Activated CD8-positive, alpha-beta T cell treated with anti-CD3 and anti-CD28 coated beads for 36 hours (primary cell): ENCODE measurements at regions of chr6 and their contacts with region 1.

Region 1: GRCh38 chr6:154733012-154733625 is at the start of gene SCAF8:
- DNase-seq: peak; percentile 80
- ATAC-seq: peak; percentile 74
- H3K4me3 Mint-ChIP-seq: peak within 1 kb of the TSS; percentile 83
- H3K27ac Mint-ChIP-seq: peak within 1 kb of the TSS; percentile 88
- H3K4me1 Mint-ChIP-seq: peaks cover 39% of the 10 kb centered on the region
- H3K27me3 Mint-ChIP-seq: no peaks in the 10 kb centered on the region
- CTCF ChIP-seq: peak; percentile 79
- total RNA-seq, gene SCAF8: 31.3 to 32.9 TPM

Region 2: GRCh38 chr6:154773610-154774089 is 40.5 kb after region 1 on chr6:
- CTCF ChIA-PET with region 1: interaction called, 3 read pairs
- POLR2A ChIA-PET with region 1: no interaction called
- intact Hi-C with region 1: loop called (anchors 5 kb)
- DNase-seq: no peak
- ATAC-seq: peak; percentile 72
- H3K4me3 Mint-ChIP-seq: peak overlapping the region; percentile 32
- H3K27ac Mint-ChIP-seq: peak overlapping the region; percentile 80
- H3K4me1 Mint-ChIP-seq: peaks cover 45% of the 10 kb centered on the region
- H3K27me3 Mint-ChIP-seq: no peaks in the 10 kb centered on the region
- CTCF ChIP-seq: no peak

Region 3: GRCh38 chr6:154805288-154805911 is 72.3 kb after region 1 on chr6:
- CTCF ChIA-PET with region 1: interaction called, 6 read pairs
- POLR2A ChIA-PET with region 1: interaction called, 5 read pairs
- intact Hi-C with region 1: loop called (anchors 2 kb)
- DNase-seq: no peak
- ATAC-seq: no peak
- H3K4me3 Mint-ChIP-seq: no peak overlapping the region
- H3K27ac Mint-ChIP-seq: no peak overlapping the region
- H3K4me1 Mint-ChIP-seq: peaks cover 5% of the 10 kb centered on the region
- H3K27me3 Mint-ChIP-seq: no peaks in the 10 kb centered on the region
- CTCF ChIP-seq: peak; percentile 58